Mammary epithelial cell (primary cell): ENCODE measurements at regions of chr19 and their contacts with region 1.

Region 1: DNA sequence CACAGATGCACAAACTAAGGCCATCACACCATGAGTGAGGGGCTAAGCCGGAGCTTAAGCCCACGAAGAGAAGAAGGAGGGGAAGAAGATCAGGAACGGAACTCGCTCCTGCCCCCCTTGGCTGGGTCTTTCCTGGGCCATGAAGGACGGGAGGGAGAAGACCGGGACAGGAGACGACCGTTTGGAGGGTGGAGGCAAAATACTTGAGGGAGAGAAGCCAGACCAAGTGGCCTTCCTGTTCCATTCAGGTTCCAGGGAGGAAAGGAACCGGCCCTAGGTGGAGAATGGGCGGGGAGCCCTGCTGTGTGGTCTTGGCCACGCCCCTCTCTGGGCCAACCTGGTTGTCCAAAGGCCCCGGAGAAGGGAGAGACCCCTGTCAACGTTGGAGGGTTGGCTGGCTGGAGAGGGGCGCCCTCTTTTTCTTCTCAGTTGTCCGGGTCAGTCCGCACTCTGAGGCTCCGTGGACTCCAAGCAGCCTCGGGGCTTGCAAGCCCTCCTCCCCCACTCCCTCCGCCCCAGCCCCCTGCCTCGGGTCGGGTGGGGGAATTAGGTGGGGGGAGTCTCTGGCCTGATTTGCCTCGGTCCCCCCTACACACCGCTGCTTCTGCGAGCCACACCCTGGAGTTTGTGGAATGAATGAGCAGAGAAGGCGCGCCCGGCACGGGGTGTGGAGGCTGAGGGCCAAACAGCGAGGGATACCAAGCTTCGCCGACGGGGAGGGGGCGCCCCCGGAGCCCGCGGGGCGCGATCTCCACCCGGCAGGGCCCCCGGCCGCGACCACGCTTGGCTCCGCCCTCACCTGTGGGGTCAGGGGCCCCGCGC is 771 bp downstream of the FBN3 start:
- DNase-seq: no peak
- H3K4me3 ChIP-seq: peak overlapping the region; percentile 20 to 26 (median 20)
- H3K27ac ChIP-seq: no peak overlapping the region
- H3K4me1 ChIP-seq: no peaks in the 10 kb centered on the region
- H3K27me3 ChIP-seq: peaks cover 14% of the 10 kb centered on the region
- CTCF ChIP-seq: no peak

Region 2: DNA sequence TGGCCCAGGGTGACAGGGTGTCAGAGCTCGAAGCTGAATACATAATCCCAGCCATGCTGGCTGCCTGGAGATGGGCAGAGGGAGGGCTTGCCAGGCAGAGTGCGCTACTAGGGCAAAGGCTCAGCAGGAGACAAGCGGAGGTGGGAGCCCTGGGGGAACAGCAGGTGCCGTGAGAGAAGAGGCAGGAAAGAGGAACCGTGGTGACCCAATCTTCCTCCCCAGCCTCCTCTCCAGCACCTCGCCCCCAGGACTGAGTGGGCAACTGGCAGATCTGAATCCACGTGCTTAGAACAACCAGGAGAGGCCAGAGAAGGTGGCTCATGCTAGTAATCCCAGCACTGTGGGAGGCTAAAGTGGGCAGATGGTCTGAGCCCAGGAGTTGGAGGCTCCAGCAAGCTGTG is 107.1 kb before region 1 on chr19:
- CTCF ChIA-PET with region 1: no interaction called
- dilution Hi-C with region 1: no loop called
- in situ Hi-C with region 1: no loop called
- intact Hi-C with region 1: loop called (anchors 10 kb)
- DNase-seq: no peak
- H3K4me3 ChIP-seq: no peak overlapping the region
- H3K27ac ChIP-seq: no peak overlapping the region
- H3K4me1 ChIP-seq: no peaks in the 10 kb centered on the region
- H3K27me3 ChIP-seq: no peaks in the 10 kb centered on the region
- CTCF ChIP-seq: no peak

Region 3: GRCh38 chr19:8064911-8065874 is 83.4 kb before region 1 on chr19:
- CTCF ChIA-PET with region 1: no interaction called
- dilution Hi-C with region 1: loop called (anchors 5 kb)
- in situ Hi-C with region 1: no loop called
- intact Hi-C with region 1: no loop called
- DNase-seq: no peak
- H3K4me3 ChIP-seq: no peak overlapping the region
- H3K27ac ChIP-seq: no peak overlapping the region
- H3K4me1 ChIP-seq: no peaks in the 10 kb centered on the region
- H3K27me3 ChIP-seq: no peaks in the 10 kb centered on the region
- CTCF ChIP-seq: no peak

Region 4: DNA sequence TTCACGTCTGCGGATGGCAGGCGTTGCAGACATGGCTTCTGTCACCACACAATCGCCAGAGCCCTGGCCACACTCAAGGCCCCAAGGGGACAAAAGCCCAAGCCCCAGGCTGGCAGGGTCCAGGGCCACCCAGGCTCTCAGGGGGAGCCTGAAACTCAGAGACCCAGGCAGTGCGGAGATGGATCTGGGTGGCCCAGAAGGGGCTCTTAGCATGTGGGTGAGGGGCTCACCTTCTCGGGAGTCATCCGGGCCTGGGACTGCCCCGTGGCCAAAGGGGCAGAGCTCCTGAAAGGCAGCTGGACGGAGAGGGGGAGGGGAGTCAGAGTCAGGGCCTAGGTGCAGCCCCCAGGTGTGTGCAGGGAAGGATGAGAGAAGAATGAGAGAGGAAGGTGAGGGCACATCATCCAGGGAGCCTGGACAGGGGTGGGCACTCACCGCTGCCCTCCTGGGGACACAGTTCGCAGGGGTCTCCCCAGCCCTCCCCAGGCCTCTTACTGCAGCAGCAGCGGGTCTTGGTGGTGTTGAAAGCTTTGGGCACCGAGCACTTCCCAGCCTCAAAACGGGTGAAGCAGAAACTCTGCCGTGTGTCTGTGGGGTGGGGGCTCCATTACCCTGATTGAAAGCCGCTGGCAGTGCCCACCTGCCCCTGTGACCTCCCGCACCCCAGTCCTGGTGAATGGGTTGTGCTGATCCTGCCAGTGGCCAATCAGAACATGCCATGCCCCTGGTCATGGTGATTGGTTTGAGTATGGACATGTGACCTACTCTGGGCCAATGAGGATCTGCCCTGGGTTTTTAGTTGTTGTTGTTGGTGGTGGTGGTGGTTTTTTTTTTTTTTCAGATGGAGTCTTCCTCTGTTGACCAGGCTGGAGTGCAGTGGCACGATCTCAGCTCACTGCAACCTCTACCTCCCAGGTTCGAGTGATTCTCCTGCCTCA is 58.7 kb before region 1 on chr19:
- CTCF ChIA-PET with region 1: no interaction called
- dilution Hi-C with region 1: loop called (anchors 5 kb)
- in situ Hi-C with region 1: no loop called
- intact Hi-C with region 1: no loop called
- DNase-seq: no peak
- H3K4me3 ChIP-seq: no peak overlapping the region
- H3K27ac ChIP-seq: no peak overlapping the region
- H3K4me1 ChIP-seq: no peaks in the 10 kb centered on the region
- H3K27me3 ChIP-seq: no peaks in the 10 kb centered on the region
- CTCF ChIP-seq: no peak

Region 5: GRCh38 chr19:8113016-8113416 is 35.6 kb before region 1 on chr19:
- CTCF ChIA-PET with region 1: no interaction called
- dilution Hi-C with region 1: no loop called
- in situ Hi-C with region 1: no loop called
- intact Hi-C with region 1: no loop called
- DNase-seq: peak; percentile 55
- H3K4me3 ChIP-seq: no peak overlapping the region
- H3K27ac ChIP-seq: no peak overlapping the region
- H3K4me1 ChIP-seq: no peaks in the 10 kb centered on the region
- H3K27me3 ChIP-seq: no peaks in the 10 kb centered on the region
- CTCF ChIP-seq: no peak

Region 6: GRCh38 chr19:8307965-8308866 is 159.6 kb after region 1 on chr19 and contains the start of gene CD320:
- CTCF ChIA-PET with region 1: no interaction called
- dilution Hi-C with region 1: no loop called
- in situ Hi-C with region 1: no loop called
- intact Hi-C with region 1: no loop called
- DNase-seq: peak; percentile 86
- H3K4me3 ChIP-seq: peak within 1 kb of the TSS; percentile 51 to 63 (median 61)
- H3K27ac ChIP-seq: peak within 1 kb of the TSS; percentile 42
- H3K4me1 ChIP-seq: peaks cover 14% of the 10 kb centered on the region
- H3K27me3 ChIP-seq: no peaks in the 10 kb centered on the region
- CTCF ChIP-seq: no peak
- total RNA-seq, gene CD320: 8.0 to 31.0 TPM